Aorta (tissue), 5 donors: ENCODE measurements at regions of chr20 and their contacts with region 1.

Region 1: GRCh38 chr20:25696384-25697131 is at the start of gene ZNF337:
- DNase-seq: peak; percentile 98 to 99
- ATAC-seq: peak; percentile 100
- H3K4me3 ChIP-seq: peak within 1 kb of the TSS; percentile 72 to 73
- H3K27ac ChIP-seq: peak within 1 kb of the TSS; percentile 29 to 73
- H3K4me1 ChIP-seq: peaks cover 0 to 4% of the 10 kb centered on the region in 2 donors
- H3K27me3 ChIP-seq: no peaks in the 10 kb centered on the region
- total RNA-seq, gene ZNF337: 15.0 to 22.8 TPM

Region 2: GRCh38 chr20:25539742-25540672 is 156.6 kb before region 1 on chr20:
- intact Hi-C with region 1: loop called in 1 of 2 experiments (anchors 10 kb)
- DNase-seq: no peak
- ATAC-seq: peak; percentile 62
- H3K4me3 ChIP-seq: peak overlapping the region; percentile 47 to 72
- H3K27ac ChIP-seq: peak overlapping the region in 1 of 2 donors; percentile 47
- H3K4me1 ChIP-seq: no peaks in the 10 kb centered on the region
- H3K27me3 ChIP-seq: no peaks in the 10 kb centered on the region

Region 3: GRCh38 chr20:25865380-25866118 is 169.0 kb after region 1 on chr20:
- intact Hi-C with region 1: loop called in 1 of 2 experiments (anchors 5 kb)
- DNase-seq: peak; percentile 85 to 94
- ATAC-seq: peak; percentile 61
- H3K4me3 ChIP-seq: no peak overlapping the region
- H3K27ac ChIP-seq: no peak overlapping the region
- H3K4me1 ChIP-seq: no peaks in the 10 kb centered on the region
- H3K27me3 ChIP-seq: no peaks in the 10 kb centered on the region